Common myeloid progenitor, CD34-positive (primary cell): ENCODE measurements at regions of chr9 and their contacts with region 1.

Region 1: DNA sequence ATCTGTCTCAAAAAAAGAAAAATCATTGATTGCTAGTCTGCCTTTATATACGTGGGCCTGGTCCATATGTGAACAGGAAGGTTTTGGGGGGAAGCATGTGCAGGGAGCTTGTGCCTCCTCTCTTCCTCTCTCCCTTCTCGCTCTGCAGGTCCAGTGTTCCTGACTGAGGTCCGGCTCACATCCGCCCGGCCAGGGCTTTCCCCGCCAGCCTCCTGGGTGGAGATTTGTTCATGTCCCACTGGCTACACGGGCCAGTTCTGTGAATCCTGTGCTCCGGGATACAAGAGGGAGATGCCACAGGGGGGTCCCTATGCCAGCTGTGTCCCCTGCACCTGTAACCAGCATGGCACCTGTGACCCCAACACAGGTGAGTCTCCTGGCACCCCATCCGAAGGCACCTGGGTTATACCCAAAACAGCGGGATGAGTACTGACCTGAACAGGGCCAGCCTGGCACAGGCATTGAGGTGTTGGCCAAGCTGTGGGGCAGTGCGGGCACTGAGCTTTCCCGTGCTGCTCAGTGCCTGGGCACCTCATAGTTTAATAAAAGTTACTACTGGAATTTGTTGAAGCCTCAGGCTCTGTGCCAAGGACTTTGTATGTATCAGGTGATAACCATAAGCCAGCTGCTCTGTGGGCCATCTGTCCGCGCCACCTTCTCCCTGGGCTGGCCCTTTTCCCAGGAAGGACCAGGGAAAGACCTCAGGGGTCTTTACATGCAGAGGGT is 39.4 kb upstream of the AIF1L start:
- DNase-seq: no peak
- H3K4me3 ChIP-seq: no peak overlapping the region
- H3K27ac ChIP-seq: no peak overlapping the region
- H3K4me1 ChIP-seq: peaks cover 0 to 22% (median 10%) of the 10 kb centered on the region in 4 experiments
- H3K27me3 ChIP-seq: no peaks in the 10 kb centered on the region

Region 2: GRCh38 chr9:131076347-131077195 is 19.6 kb after region 1 on chr9:
- CTCF ChIA-PET with region 1: interaction called, 12 read pairs
- POLR2A ChIA-PET with region 1: no interaction called
- DNase-seq: no peak
- H3K4me3 ChIP-seq: no peak overlapping the region
- H3K27ac ChIP-seq: no peak overlapping the region
- H3K4me1 ChIP-seq: no peaks in the 10 kb centered on the region
- H3K27me3 ChIP-seq: no peaks in the 10 kb centered on the region